GM23248 (cell line): ENCODE measurements at regions of chr22 and their contacts with region 1.

Region 1: DNA sequence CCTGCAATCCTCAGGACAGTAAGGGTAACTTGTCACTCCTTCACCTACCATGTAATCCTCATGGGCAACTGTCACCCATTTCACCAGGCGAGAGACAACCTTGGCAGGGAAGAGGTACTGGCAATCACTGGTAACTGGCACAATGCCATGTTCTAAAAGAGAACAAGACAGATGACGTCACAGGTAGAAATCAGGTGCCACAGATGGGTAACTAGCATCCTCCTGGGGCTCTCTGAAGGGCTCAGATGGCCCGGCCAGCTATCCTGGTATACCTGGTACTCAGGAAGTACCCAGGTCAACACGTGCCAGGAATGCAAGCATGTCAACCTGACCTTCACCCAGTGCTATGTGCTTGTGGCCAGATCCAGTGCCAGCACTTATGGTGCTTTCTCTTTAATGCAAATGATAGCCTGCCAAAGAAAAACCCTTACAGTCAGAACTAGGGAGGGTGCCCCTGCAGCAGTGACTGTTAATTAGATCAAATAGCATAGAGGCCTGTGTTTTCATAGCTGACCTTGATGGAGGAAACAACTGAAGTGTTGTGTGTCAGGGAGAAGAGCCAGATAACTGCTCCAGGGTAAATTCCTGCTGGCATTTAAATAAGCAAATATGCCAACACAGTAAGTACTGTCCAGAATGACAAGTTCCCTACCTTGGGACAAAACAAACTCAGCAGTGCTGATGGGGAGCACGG is 36.2 kb downstream of the THOC5 start:
- DNase-seq: peak; percentile 4
- H3K4me3 ChIP-seq: no peak overlapping the region
- H3K27ac ChIP-seq: no peak overlapping the region
- H3K4me1 ChIP-seq: 0 out of 2 replicates have a peak, but pooled peaks cover 5% of the 10 kb centered on the region
- H3K27me3 ChIP-seq: no peaks in the 10 kb centered on the region

Region 2: DNA sequence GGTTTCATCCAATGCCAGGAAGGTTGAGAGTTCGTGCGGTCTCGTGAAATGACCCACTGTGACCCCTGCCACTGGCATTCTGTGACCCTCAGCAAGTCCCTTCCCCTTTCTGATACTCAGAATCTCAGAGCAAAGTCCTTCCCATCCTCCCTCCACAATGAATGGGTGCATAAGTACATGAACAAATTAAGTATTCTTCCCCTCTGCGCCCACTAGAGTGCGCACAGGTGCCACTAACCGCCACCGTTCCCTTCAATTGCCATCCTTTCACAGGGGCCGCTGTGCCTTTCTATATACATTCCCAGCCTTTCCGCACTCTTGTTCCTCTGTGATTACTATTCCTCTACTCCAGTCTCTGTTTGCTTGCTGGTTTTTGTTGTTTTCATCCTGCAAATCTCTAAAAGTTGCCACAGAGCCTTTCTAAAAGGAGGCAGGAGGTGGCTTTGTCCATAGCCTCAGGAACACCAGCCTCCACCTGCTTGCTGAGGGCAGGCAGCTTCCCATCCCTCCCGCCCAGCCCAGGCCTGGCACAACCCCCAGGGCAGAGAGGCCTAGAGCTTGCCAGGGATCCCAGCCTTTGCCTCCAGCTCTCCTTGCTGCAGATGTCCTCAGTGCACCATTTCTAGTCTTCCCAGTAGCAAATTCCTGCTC is 122.3 kb before region 1 on chr22:
- in situ Hi-C with region 1: loop called (anchors 10 kb)
- DNase-seq: peak; percentile 83
- H3K4me3 ChIP-seq: no peak overlapping the region
- H3K27ac ChIP-seq: no peak overlapping the region
- H3K4me1 ChIP-seq: no peaks in the 10 kb centered on the region
- H3K27me3 ChIP-seq: no peaks in the 10 kb centered on the region